Breast epithelium (tissue), 4 donors: ENCODE measurements at regions of chr17 and their contacts with region 1.

Region 1: GRCh38 chr17:44176671-44177501 is 6.4 kb downstream of the ASB16 start:
- DNase-seq: no peak
- H3K4me3 ChIP-seq: no peak overlapping the region
- H3K27ac ChIP-seq: no peak overlapping the region
- H3K4me1 ChIP-seq: no peaks in the 10 kb centered on the region
- H3K27me3 ChIP-seq: no peaks in the 10 kb centered on the region
- CTCF ChIP-seq: no peak
- POLR2A ChIP-seq: no peak

Region 2: GRCh38 chr17:44235583-44235936 is 58.7 kb after region 1 on chr17:
- intact Hi-C with region 1: no loop called
- DNase-seq: no peak
- H3K4me3 ChIP-seq: no peak overlapping the region
- H3K27ac ChIP-seq: no peak overlapping the region
- H3K4me1 ChIP-seq: no peaks in the 10 kb centered on the region
- H3K27me3 ChIP-seq: no peaks in the 10 kb centered on the region
- CTCF ChIP-seq: no peak
- POLR2A ChIP-seq: no peak

Region 3: GRCh38 chr17:44655983-44656710 is 479.3 kb after region 1 on chr17 and contains the start of gene MEIOC:
- intact Hi-C with region 1: loop called (anchors 5 kb)
- DNase-seq: no peak
- H3K4me3 ChIP-seq: peak within 1 kb of the TSS in 2 of 3 donors; percentile 29 to 32
- H3K27ac ChIP-seq: no peak within 1 kb of the TSS
- H3K4me1 ChIP-seq: peaks cover 0 to 2% of the 10 kb centered on the region in 2 donors
- H3K27me3 ChIP-seq: peaks cover 6 to 35% of the 10 kb centered on the region in 2 donors
- CTCF ChIP-seq: no peak
- POLR2A ChIP-seq: no peak
- total RNA-seq, gene MEIOC: under 0.01 TPM in 1 of 3 donors, not detected in the others